ENCODE measurements at regions of chr3 and their contacts with region 1.

Region 1: DNA sequence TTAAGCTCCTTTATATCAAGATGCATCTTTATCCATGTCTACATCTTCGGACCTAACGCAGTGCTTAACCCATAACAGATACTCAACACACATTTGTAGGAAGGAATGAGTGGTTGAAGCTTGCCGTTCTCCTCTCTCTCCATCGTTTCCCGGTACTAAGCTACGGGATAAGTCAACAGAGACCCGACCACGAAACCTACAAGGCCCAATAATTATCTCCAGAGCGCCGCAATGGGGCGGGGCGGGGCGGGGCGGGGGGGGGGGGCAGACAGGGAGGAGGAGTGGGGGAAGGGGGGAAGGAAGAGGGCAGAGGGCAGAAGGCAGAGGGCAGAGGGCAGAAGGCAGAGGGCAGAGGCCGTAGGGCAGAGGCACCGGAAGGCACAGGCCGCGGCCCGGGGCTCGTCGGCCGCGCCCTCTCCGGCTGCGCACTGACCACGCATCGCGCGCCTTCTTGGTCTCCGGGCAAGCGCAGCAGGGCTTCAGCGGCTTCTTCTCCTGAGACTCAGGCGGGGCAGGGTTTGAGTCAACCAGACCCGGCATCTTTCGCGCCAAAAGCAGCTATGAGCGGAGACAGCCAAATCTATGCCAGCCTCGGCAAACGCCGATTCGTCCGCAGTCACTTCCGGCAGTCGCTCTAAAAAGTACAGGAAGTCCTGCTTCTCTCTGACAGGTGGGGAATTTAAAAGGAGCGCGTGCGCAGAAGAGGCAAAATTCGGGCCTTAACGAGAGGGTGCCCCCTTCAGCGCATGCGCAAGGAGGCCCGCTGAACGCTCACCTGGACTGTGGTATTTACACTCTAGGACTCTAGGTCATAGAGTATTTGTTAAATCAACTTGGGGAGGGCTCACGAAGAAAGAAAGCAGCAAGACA is at the start of gene COX17:
- DNase-seq: peak; percentile 94 to 99 (median 97)
- H3K4me3 ChIP-seq: peak within 1 kb of the TSS; percentile 72 to 89
- H3K4me3 Mint-ChIP-seq: peak within 1 kb of the TSS; percentile 83 to 97 (median 91)
- H3K27ac ChIP-seq: peak within 1 kb of the TSS; percentile 69
- H3K27ac Mint-ChIP-seq: peak within 1 kb of the TSS; percentile 87 to 99 (median 96)
- H3K4me1 ChIP-seq: peaks cover 34% of the 10 kb centered on the region
- H3K4me1 Mint-ChIP-seq: peaks cover 27 to 42% (median 32%) of the 10 kb centered on the region in 4 donors
- H3K27me3 ChIP-seq: no peaks in the 10 kb centered on the region
- H3K27me3 Mint-ChIP-seq: no peaks in the 10 kb centered on the region
- total RNA-seq, gene COX17: 46.1 to 48.9 TPM

Region 2: GRCh38 chr3:119098619-119099222 is 578.3 kb before region 1 on chr3:
- CTCF ChIA-PET with region 1: interaction called, 4 read pairs
- POLR2A ChIA-PET with region 1: no interaction called
- intact Hi-C with region 1: loop called (anchors 2 kb)
- DNase-seq: peak in 4 of 5 donors; percentile 35 to 58 (median 42)
- H3K4me3 ChIP-seq: no peak overlapping the region
- H3K4me3 Mint-ChIP-seq: no peak overlapping the region
- H3K27ac ChIP-seq: no peak overlapping the region
- H3K27ac Mint-ChIP-seq: no peak overlapping the region
- H3K4me1 ChIP-seq: no peaks in the 10 kb centered on the region
- H3K4me1 Mint-ChIP-seq: no peaks in the 10 kb centered on the region
- H3K27me3 ChIP-seq: no peaks in the 10 kb centered on the region
- H3K27me3 Mint-ChIP-seq: peaks cover 0 to 2% of the 10 kb centered on the region in 2 donors

Region 3: GRCh38 chr3:119463171-119464169 is 213.5 kb before region 1 on chr3 and contains the start of gene TMEM39A:
- CTCF ChIA-PET with region 1: interaction called, 4 read pairs
- POLR2A ChIA-PET with region 1: interaction called, 10 read pairs
- intact Hi-C with region 1: loop called (anchors 1 kb)
- DNase-seq: peak; percentile 98 to 99 (median 99)
- H3K4me3 ChIP-seq: peak within 1 kb of the TSS; percentile 91 to 98
- H3K4me3 Mint-ChIP-seq: peak within 1 kb of the TSS; percentile 93 to 97 (median 95)
- H3K27ac ChIP-seq: peak within 1 kb of the TSS; percentile 91
- H3K27ac Mint-ChIP-seq: peak within 1 kb of the TSS; percentile 98 to 99 (median 99)
- H3K4me1 ChIP-seq: peaks cover 33% of the 10 kb centered on the region
- H3K4me1 Mint-ChIP-seq: peaks cover 24 to 58% (median 38%) of the 10 kb centered on the region in 4 donors
- H3K27me3 ChIP-seq: no peaks in the 10 kb centered on the region
- H3K27me3 Mint-ChIP-seq: peaks cover 0 to 2% of the 10 kb centered on the region in 2 donors
- total RNA-seq, gene TMEM39A: 46.1 to 47.4 TPM

Region 4: GRCh38 chr3:119618905-119619493 is 58.0 kb before region 1 on chr3:
- CTCF ChIA-PET with region 1: no interaction called
- POLR2A ChIA-PET with region 1: no interaction called
- intact Hi-C with region 1: no loop called
- DNase-seq: no peak
- H3K4me3 ChIP-seq: no peak overlapping the region
- H3K4me3 Mint-ChIP-seq: no peak overlapping the region
- H3K27ac ChIP-seq: no peak overlapping the region
- H3K27ac Mint-ChIP-seq: no peak overlapping the region
- H3K4me1 ChIP-seq: no peaks in the 10 kb centered on the region
- H3K4me1 Mint-ChIP-seq: no peaks in the 10 kb centered on the region
- H3K27me3 ChIP-seq: no peaks in the 10 kb centered on the region
- H3K27me3 Mint-ChIP-seq: peaks cover 2 to 11% of the 10 kb centered on the region in 2 donors

Region 5: GRCh38 chr3:119702530-119703157 is 25.6 kb after region 1 on chr3 and contains the start of gene CFAP91:
- CTCF ChIA-PET with region 1: interaction called, 4 read pairs
- POLR2A ChIA-PET with region 1: no interaction called
- intact Hi-C with region 1: loop called (anchors 1 kb)
- DNase-seq: peak; percentile 70 to 85 (median 77)
- H3K4me3 ChIP-seq: peak within 1 kb of the TSS; percentile 14 to 53
- H3K4me3 Mint-ChIP-seq: peak within 1 kb of the TSS; percentile 80 to 89 (median 82)
- H3K27ac ChIP-seq: peak within 1 kb of the TSS; percentile 24
- H3K27ac Mint-ChIP-seq: peak within 1 kb of the TSS; percentile 42 to 85 (median 73)
- H3K4me1 ChIP-seq: peaks cover 25% of the 10 kb centered on the region
- H3K4me1 Mint-ChIP-seq: peaks cover 15 to 46% (median 25%) of the 10 kb centered on the region in 4 donors
- H3K27me3 ChIP-seq: no peaks in the 10 kb centered on the region
- H3K27me3 Mint-ChIP-seq: no peaks in the 10 kb centered on the region
- total RNA-seq, gene CFAP91: 0.58 TPM in 1 of 2 experiments, not detected in the other

Region 6: GRCh38 chr3:120596116-120596852 is 919.3 kb after region 1 on chr3 and contains the start of gene NDUFB4:
- CTCF ChIA-PET with region 1: no interaction called
- POLR2A ChIA-PET with region 1: no interaction called
- intact Hi-C with region 1: loop called (anchors 5 kb)
- DNase-seq: peak; percentile 89 to 96 (median 96)
- H3K4me3 ChIP-seq: peak within 1 kb of the TSS; percentile 97 to 99
- H3K4me3 Mint-ChIP-seq: peak within 1 kb of the TSS; percentile 91 to 98 (median 95)
- H3K27ac ChIP-seq: peak within 1 kb of the TSS; percentile 98
- H3K27ac Mint-ChIP-seq: peak within 1 kb of the TSS in 6 of 7 donors; percentile 96 to 99 (median 98)
- H3K4me1 ChIP-seq: peaks cover 30% of the 10 kb centered on the region
- H3K4me1 Mint-ChIP-seq: peaks cover 6 to 8% (median 7%) of the 10 kb centered on the region in 4 donors
- H3K27me3 ChIP-seq: no peaks in the 10 kb centered on the region
- H3K27me3 Mint-ChIP-seq: no peaks in the 10 kb centered on the region
- total RNA-seq, gene NDUFB4: 82.1 to 82.8 TPM